Left cardiac atrium (tissue), 4 donors: ENCODE measurements at regions of chr2 and their contacts with region 1.

Region 1: DNA sequence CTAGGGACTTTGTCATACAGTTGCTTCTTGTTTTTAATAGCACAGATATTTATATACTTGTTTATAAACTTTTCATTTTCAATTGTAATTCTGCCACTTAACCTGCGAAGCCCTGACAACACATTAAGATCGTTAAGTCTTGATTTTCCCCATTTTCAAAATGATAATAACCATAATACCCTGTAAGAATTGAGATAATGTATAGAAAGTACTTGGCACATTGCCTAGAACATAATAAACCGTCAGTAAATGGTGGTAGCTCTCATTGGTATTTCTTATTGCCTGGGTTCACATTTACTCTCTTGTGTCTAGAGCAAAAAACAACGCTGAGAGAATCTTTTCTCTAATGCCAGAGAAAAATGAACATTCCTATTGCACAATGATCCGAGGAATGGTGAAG is 18.6 kb downstream of the PTCD3 start:
- DNase-seq: no peak
- ATAC-seq: no peak

Region 2: GRCh38 chr2:86160156-86160952 is 35.7 kb after region 1 on chr2:
- intact Hi-C with region 1: loop called (anchors 5 kb)
- DNase-seq: no peak
- ATAC-seq: no peak